ENCODE measurements at regions of chr6 and their contacts with region 1.

Region 1: DNA sequence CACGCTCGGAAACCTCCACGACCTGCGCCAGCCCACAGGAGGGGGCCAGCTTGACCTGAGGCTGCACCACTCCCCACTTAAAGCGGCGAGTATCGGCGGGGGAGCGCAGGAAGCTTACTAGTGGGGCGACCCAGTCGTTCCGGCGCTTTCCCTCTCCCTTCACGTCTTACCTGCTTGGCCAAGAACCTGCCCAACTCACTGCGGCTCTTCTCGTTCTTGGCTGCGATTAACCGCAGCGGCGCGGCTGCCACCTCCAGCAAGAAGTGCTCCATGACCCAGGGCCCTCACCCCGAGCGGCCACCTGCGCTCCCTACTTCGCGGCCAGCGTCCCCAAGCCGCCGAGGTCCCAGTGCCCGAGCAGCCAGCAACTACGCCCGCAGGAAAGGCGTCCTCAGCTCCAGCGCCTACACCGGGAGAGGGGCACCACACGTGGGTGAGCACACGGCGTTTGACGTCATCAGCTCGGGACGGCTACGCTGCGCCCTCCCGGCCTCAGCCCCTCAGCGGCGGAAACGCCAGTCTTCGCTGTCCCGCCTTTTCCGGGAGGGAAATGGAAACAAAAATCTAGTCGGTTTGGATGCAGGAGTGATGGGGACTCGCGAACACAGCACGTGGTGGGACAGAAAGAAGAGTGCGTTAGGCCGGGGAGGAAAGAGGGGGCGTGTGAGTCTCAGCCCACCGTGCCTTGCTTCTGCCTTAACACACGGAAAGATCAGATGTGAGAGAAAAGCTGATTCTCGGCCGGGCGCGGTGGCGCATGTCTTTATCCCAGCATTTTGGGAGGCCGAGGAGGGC is at the start of gene MDN1:
- DNase-seq: peak; percentile 90
- H3K27ac ChIP-seq: peak within 1 kb of the TSS; percentile 87
- CTCF ChIP-seq: no peak

Region 2: DNA sequence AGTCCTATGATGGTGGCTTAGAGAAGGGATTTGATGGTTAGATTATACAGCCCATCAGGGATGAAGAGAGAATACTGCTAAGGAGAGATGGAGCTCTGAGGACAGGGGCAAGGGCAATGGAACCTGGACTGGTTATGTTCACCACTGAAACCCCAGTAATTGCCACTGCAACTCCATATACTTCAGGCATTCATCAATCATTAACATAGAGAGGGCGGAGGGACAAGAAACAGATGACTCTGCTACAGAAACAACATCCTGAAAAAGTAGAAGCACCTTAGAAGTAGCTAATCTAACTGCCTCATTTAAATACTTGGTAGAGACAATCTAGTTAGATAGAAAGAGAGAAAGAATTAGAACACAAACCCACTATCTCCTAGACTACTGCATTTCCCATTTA is 89.7 kb before region 1 on chr6:
- CTCF ChIA-PET with region 1: no interaction called
- POLR2A ChIA-PET with region 1: no interaction called
- DNase-seq: no peak
- H3K27ac ChIP-seq: no peak overlapping the region
- CTCF ChIP-seq: no peak

Region 3: DNA sequence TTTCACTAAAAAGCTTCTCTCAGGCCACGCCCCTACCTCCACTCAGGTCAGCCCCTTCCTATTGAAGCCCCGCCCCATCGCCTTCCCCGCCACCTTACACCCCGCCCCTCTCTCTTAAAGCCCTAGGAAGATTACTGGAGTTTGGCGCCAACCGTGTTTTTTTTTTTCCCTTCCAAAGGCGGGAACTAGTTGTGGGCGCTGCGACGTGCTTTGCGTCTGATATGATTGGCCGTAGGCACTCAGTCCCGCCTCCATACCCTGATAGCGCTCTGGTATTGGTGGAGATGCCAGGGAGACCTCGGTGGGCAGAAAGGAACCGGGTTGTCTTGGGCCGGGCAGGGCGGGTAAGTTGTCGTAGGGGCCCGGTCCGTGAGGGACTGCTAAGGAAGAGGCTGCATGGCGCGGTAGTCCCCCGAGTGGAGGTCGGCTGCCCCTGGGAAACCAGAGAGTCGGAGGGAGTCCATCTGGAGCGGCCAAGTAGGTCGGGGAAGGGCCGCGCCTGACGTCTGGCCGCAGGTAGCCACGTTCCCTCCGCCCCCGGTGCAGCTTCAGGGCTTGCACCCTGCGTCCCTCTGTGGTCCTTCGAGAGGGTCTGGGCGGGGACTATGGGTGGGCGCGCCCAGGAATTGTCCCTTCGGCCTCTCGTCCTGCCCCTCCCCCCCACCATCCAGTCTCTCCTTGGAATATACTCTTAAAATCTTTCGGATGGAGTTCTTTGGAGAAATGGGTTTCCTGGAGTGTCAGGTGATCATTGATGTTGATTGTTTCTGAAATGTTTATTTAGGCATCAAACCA is 10.3 kb after region 1 on chr6 and contains the start of gene CASP8AP2:
- CTCF ChIA-PET with region 1: interaction called, 5 read pairs
- POLR2A ChIA-PET with region 1: interaction called, 10 read pairs
- DNase-seq: peak; percentile 99
- H3K27ac ChIP-seq: peak within 1 kb of the TSS; percentile 86
- CTCF ChIP-seq: no peak

Region 4: DNA sequence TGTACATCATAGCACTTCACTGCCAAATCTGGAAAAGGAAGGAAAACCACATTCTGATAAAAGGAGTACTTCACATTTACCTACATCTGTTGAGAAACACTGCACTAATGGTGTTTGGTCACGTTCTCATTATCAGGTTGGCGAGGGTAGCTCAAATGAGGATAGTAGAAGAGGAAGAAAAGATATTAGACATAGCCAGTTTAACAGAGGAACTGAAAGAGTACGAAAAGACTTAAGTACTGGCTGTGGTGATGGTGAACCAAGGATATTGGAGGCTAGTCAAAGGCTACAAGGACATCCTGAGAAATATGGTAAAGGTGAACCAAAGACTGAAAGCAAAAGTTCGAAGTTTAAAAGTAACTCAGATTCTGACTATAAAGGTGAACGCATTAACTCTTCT is 42.7 kb after region 1 on chr6:
- CTCF ChIA-PET with region 1: no interaction called
- POLR2A ChIA-PET with region 1: no interaction called
- DNase-seq: no peak
- H3K27ac ChIP-seq: no peak overlapping the region
- CTCF ChIP-seq: no peak

Region 5: GRCh38 chr6:89921691-89922090 is 102.2 kb after region 1 on chr6:
- CTCF ChIA-PET with region 1: no interaction called
- POLR2A ChIA-PET with region 1: no interaction called
- DNase-seq: peak; percentile 77
- H3K27ac ChIP-seq: no peak overlapping the region
- CTCF ChIP-seq: no peak